ENCODE measurements at regions of chr18 and their contacts with region 1.

Region 1: GRCh38 chr18:31512203-31512764 is 14.3 kb downstream of the DSG2 start:
- DNase-seq: peak; percentile 87
- H3K4me3 Mint-ChIP-seq: peak overlapping the region; percentile 59
- H3K27ac Mint-ChIP-seq: peak overlapping the region; percentile 95
- H3K4me1 Mint-ChIP-seq: peaks cover 51% of the 10 kb centered on the region
- H3K27me3 Mint-ChIP-seq: no peaks in the 10 kb centered on the region
- CTCF ChIP-seq: no peak

Region 2: DNA sequence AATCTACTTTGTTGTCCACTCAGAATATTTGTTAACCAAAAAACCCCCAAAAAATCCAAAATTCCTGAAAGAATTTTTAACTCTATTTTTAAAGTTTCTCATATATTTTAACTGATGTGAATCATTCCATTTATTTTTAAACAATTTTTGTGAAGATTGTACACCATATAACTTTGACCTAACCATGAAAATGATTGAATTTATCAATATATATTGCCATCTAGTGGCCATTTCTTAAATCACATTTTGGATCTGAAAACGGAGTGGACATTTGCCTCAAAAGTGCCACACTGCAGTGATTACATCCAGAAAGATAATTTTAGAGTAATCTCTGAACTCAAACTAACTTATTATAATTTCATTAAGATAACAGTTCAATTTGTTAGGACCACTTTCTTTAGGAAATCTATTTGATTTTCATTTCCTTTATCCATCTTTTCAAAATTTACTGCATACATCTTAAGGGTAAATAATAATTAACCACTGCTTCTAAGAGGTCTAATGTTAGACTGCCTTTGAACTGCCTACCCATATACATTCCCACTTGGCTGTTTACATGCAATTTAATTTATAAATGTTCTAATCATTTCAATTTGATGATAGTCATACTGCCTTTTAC is 540.8 kb before region 1 on chr18:
- CTCF ChIA-PET with region 1: interaction called, 3 read pairs
- POLR2A ChIA-PET with region 1: interaction called, 5 read pairs
- intact Hi-C with region 1: loop called (anchors 10 kb)
- DNase-seq: peak; percentile 52
- H3K4me3 Mint-ChIP-seq: no peak overlapping the region
- H3K27ac Mint-ChIP-seq: no peak overlapping the region
- H3K4me1 Mint-ChIP-seq: no peaks in the 10 kb centered on the region
- H3K27me3 Mint-ChIP-seq: no peaks in the 10 kb centered on the region
- CTCF ChIP-seq: peak; percentile 36

Region 3: GRCh38 chr18:31454066-31454708 is 58.1 kb before region 1 on chr18:
- CTCF ChIA-PET with region 1: interaction called, 5 read pairs
- POLR2A ChIA-PET with region 1: interaction called, 86 read pairs
- intact Hi-C with region 1: no loop called
- DNase-seq: peak; percentile 96
- H3K4me3 Mint-ChIP-seq: peak overlapping the region; percentile 67
- H3K27ac Mint-ChIP-seq: peak overlapping the region; percentile 94
- H3K4me1 Mint-ChIP-seq: peaks cover 23% of the 10 kb centered on the region
- H3K27me3 Mint-ChIP-seq: no peaks in the 10 kb centered on the region
- CTCF ChIP-seq: no peak

Region 4: GRCh38 chr18:31484461-31484860 is 27.8 kb before region 1 on chr18:
- CTCF ChIA-PET with region 1: interaction called, 3 read pairs
- POLR2A ChIA-PET with region 1: interaction called, 55 read pairs
- intact Hi-C with region 1: no loop called
- DNase-seq: no peak
- H3K4me3 Mint-ChIP-seq: no peak overlapping the region
- H3K27ac Mint-ChIP-seq: no peak overlapping the region
- H3K4me1 Mint-ChIP-seq: peaks cover 41% of the 10 kb centered on the region
- H3K27me3 Mint-ChIP-seq: no peaks in the 10 kb centered on the region
- CTCF ChIP-seq: no peak

Region 5: GRCh38 chr18:31490387-31490786 is 21.9 kb before region 1 on chr18:
- CTCF ChIA-PET with region 1: interaction called, 6 read pairs
- POLR2A ChIA-PET with region 1: interaction called, 189 read pairs
- intact Hi-C with region 1: no loop called
- DNase-seq: peak; percentile 73
- H3K4me3 Mint-ChIP-seq: no peak overlapping the region
- H3K27ac Mint-ChIP-seq: peak overlapping the region; percentile 65
- H3K4me1 Mint-ChIP-seq: peaks cover 49% of the 10 kb centered on the region
- H3K27me3 Mint-ChIP-seq: no peaks in the 10 kb centered on the region
- CTCF ChIP-seq: no peak

Region 6: GRCh38 chr18:31497837-31498573 is 14.3 kb before region 1 on chr18 and contains the start of gene DSG2:
- CTCF ChIA-PET with region 1: interaction called, 10 read pairs
- POLR2A ChIA-PET with region 1: interaction called, 189 read pairs
- intact Hi-C with region 1: no loop called
- DNase-seq: peak; percentile 83
- H3K4me3 Mint-ChIP-seq: peak within 1 kb of the TSS; percentile 87
- H3K27ac Mint-ChIP-seq: peak within 1 kb of the TSS; percentile 66
- H3K4me1 Mint-ChIP-seq: peaks cover 19% of the 10 kb centered on the region
- H3K27me3 Mint-ChIP-seq: no peaks in the 10 kb centered on the region
- CTCF ChIP-seq: no peak
- total RNA-seq, gene DSG2: 106 and 134 TPM in 2 replicates

Region 7: GRCh38 chr18:31526374-31526773 is 14.1 kb after region 1 on chr18:
- CTCF ChIA-PET with region 1: interaction called, 3 read pairs
- POLR2A ChIA-PET with region 1: interaction called, 10 read pairs
- intact Hi-C with region 1: no loop called
- DNase-seq: no peak
- H3K4me3 Mint-ChIP-seq: no peak overlapping the region
- H3K27ac Mint-ChIP-seq: no peak overlapping the region
- H3K4me1 Mint-ChIP-seq: no peaks in the 10 kb centered on the region
- H3K27me3 Mint-ChIP-seq: no peaks in the 10 kb centered on the region
- CTCF ChIP-seq: no peak

Region 8: GRCh38 chr18:31741097-31741735 is 228.9 kb after region 1 on chr18:
- CTCF ChIA-PET with region 1: no interaction called
- POLR2A ChIA-PET with region 1: no interaction called
- intact Hi-C with region 1: no loop called
- DNase-seq: peak; percentile 59
- H3K4me3 Mint-ChIP-seq: no peak overlapping the region
- H3K27ac Mint-ChIP-seq: no peak overlapping the region
- H3K4me1 Mint-ChIP-seq: no peaks in the 10 kb centered on the region
- H3K27me3 Mint-ChIP-seq: no peaks in the 10 kb centered on the region
- CTCF ChIP-seq: peak; percentile 81

Region 9: DNA sequence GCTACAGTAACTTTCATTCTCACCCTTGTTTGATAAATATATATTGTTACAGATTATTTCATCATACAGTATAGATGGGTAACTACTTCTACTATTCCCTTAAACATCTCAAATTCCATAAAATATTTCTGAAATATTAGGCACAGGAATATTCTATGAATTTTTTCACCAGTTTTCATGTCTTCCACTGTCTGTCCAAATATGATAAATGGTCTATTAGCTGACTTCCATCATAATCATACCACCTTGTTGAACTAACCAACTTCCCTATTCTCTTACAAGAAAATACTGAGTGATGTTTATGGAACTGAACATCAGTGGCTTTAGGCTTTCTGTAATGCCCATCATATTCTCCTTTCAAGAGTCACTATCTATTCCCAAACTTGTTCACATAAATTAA is 348.2 kb after region 1 on chr18:
- CTCF ChIA-PET with region 1: no interaction called
- POLR2A ChIA-PET with region 1: no interaction called
- intact Hi-C with region 1: no loop called
- DNase-seq: no peak
- H3K4me3 Mint-ChIP-seq: no peak overlapping the region
- H3K27ac Mint-ChIP-seq: no peak overlapping the region
- H3K4me1 Mint-ChIP-seq: peaks cover 6% of the 10 kb centered on the region
- H3K27me3 Mint-ChIP-seq: no peaks in the 10 kb centered on the region
- CTCF ChIP-seq: no peak